Activated B cell treated with CpG ODN at 0.5 μM for 24 hours (primary cell): ENCODE measurements at regions of chr3 and their contacts with region 1.

Region 1: DNA sequence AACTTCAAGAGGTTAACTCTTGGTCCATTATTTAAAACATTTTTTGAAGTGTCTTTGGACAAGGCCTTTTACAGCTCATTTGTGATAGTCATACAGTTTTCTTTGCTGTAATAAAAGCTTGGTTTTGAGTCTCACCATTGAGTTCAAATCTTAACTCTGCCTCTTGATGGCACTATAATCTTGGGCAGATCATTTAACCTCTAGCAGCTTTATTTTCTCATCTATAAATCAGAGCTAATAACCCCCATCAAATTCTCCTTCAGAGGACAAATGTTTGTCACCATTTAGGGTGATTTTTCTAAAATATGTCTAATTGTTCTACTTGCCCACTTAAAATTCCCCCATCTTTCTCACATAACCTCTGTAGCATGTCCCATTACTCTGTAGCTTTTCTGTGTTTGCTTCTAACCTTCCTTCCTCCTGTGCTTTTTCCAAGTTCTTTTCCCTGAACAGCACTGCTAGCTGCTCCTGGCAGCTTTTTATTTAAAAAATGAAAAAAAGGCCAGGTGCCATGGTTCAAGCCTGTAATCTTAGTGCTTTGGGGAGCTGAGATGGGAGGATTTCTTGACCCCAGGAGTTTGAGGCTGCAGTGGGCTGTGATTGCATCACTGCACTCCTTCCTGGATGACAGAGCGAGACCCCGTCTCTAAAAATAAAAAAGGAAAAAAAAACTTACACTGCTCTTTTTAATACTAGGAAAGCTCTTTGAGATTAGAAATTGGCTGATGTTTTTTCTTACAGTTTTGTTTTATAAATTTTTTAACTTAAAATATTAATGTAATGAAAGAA is 28.5 kb downstream of the UBE2E1 start:
- DNase-seq: no peak
- ATAC-seq: no peak
- H3K4me3 Mint-ChIP-seq: no peak overlapping the region
- H3K27ac Mint-ChIP-seq: no peak overlapping the region
- H3K4me1 Mint-ChIP-seq: peaks cover 75% of the 10 kb centered on the region
- H3K27me3 Mint-ChIP-seq: no peaks in the 10 kb centered on the region
- CTCF ChIP-seq: no peak

Region 2: GRCh38 chr3:22039161-22039560 is 1795.1 kb before region 1 on chr3:
- CTCF ChIA-PET with region 1: no interaction called
- POLR2A ChIA-PET with region 1: no interaction called
- intact Hi-C with region 1: no loop called
- DNase-seq: no peak
- ATAC-seq: no peak
- H3K4me3 Mint-ChIP-seq: no peak overlapping the region
- H3K27ac Mint-ChIP-seq: no peak overlapping the region
- H3K4me1 Mint-ChIP-seq: no peaks in the 10 kb centered on the region
- H3K27me3 Mint-ChIP-seq: no peaks in the 10 kb centered on the region
- CTCF ChIP-seq: no peak

Region 3: GRCh38 chr3:23174426-23175039 is 659.7 kb before region 1 on chr3:
- CTCF ChIA-PET with region 1: no interaction called
- POLR2A ChIA-PET with region 1: no interaction called
- intact Hi-C with region 1: no loop called
- DNase-seq: no peak
- ATAC-seq: no peak
- H3K4me3 Mint-ChIP-seq: no peak overlapping the region
- H3K27ac Mint-ChIP-seq: no peak overlapping the region
- H3K4me1 Mint-ChIP-seq: no peaks in the 10 kb centered on the region
- H3K27me3 Mint-ChIP-seq: peaks cover 4% of the 10 kb centered on the region
- CTCF ChIP-seq: no peak

Region 4: GRCh38 chr3:23805633-23806533 is 28.4 kb before region 1 on chr3 and contains the start of gene UBE2E1:
- CTCF ChIA-PET with region 1: interaction called, 5 read pairs
- POLR2A ChIA-PET with region 1: interaction called, 23 read pairs
- intact Hi-C with region 1: loop called (anchors 1 kb)
- DNase-seq: peak; percentile 68
- ATAC-seq: peak; percentile 77
- H3K4me3 Mint-ChIP-seq: peak within 1 kb of the TSS; percentile 97
- H3K27ac Mint-ChIP-seq: peak within 1 kb of the TSS; percentile 97
- H3K4me1 Mint-ChIP-seq: peaks cover 41% of the 10 kb centered on the region
- H3K27me3 Mint-ChIP-seq: no peaks in the 10 kb centered on the region
- CTCF ChIP-seq: no peak
- total RNA-seq, gene UBE2E1: 79.9 and 85.2 TPM in 2 replicates

Region 5: DNA sequence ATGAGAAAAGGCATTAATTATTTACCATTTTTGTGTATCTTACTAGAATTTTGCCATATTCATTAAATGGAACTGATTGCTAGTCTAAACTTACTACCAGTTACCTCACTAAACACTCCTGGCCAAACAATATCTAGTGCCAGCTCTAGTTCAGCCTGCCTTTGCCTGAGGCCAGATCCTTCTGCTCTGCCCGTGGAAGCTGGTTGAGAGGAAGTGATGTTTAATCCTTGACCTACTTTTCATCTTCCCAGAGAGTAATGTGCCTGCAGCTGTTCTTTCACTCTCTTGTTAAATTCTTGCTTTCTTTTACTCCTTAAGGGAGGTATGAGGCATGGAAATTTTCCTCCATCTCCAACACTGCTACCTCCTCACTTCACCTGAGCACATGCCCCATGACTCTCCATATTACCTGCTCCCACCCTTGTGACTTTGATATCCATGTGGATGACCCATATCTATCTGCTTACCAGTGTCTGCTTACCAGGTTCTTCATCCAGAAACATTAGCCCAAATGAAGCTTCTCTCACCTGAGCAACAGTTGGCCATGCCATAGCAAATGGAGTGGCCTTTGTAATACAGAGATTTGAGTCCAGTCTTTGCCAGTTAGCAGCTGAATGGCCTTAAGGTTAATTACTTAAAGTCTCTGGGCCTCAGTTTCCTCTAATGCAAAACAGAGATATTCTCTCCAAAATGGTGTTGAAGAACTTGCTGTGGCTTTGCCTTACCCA is 24.9 kb after region 1 on chr3:
- CTCF ChIA-PET with region 1: interaction called, 5 read pairs
- POLR2A ChIA-PET with region 1: interaction called, 3 read pairs
- intact Hi-C with region 1: loop called (anchors 1 kb)
- DNase-seq: no peak
- ATAC-seq: no peak
- H3K4me3 Mint-ChIP-seq: no peak overlapping the region
- H3K27ac Mint-ChIP-seq: no peak overlapping the region
- H3K4me1 Mint-ChIP-seq: peaks cover 54% of the 10 kb centered on the region
- H3K27me3 Mint-ChIP-seq: no peaks in the 10 kb centered on the region
- CTCF ChIP-seq: no peak

Region 6: DNA sequence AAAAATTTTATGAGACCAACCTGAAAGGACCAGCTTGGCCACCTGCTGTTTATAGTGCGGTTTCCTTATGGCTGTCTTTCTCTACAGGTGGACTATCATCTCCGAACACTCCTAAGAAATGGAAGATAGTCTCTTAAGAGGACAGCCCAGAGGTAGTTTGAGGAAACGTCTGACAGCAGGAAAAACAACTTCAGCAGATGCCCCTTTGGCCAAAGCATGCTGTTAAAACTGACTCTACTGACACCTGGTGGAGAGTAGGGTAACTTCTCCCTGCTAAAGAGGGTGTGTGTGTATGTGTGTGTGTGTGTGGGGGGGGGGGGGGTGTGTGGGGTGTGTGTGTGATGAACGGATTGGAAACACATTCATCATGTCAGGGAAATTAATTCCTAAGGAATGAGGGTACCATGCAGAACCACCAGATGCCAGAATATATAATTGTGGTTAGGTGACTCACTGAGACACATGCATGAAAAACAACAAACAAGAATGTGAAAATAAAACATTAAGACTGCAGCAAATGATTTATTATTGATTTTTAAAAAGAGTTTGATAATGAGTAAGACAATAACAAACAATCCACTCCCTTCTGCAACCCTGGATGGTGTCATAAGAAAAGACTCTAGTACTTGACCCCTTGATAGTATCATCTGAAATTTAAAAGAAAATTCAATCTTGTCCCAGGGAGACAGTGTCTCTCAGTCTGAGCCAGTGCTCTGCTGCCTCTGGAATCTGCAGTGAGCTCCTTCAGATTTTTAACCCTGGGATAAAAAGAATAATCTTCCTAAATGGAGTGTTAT is 403.9 kb after region 1 on chr3:
- CTCF ChIA-PET with region 1: no interaction called
- POLR2A ChIA-PET with region 1: no interaction called
- intact Hi-C with region 1: loop called (anchors 5 kb)
- DNase-seq: no peak
- ATAC-seq: peak; percentile 75
- H3K4me3 Mint-ChIP-seq: no peak overlapping the region
- H3K27ac Mint-ChIP-seq: no peak overlapping the region
- H3K4me1 Mint-ChIP-seq: no peaks in the 10 kb centered on the region
- H3K27me3 Mint-ChIP-seq: no peaks in the 10 kb centered on the region
- CTCF ChIP-seq: no peak

Region 7: DNA sequence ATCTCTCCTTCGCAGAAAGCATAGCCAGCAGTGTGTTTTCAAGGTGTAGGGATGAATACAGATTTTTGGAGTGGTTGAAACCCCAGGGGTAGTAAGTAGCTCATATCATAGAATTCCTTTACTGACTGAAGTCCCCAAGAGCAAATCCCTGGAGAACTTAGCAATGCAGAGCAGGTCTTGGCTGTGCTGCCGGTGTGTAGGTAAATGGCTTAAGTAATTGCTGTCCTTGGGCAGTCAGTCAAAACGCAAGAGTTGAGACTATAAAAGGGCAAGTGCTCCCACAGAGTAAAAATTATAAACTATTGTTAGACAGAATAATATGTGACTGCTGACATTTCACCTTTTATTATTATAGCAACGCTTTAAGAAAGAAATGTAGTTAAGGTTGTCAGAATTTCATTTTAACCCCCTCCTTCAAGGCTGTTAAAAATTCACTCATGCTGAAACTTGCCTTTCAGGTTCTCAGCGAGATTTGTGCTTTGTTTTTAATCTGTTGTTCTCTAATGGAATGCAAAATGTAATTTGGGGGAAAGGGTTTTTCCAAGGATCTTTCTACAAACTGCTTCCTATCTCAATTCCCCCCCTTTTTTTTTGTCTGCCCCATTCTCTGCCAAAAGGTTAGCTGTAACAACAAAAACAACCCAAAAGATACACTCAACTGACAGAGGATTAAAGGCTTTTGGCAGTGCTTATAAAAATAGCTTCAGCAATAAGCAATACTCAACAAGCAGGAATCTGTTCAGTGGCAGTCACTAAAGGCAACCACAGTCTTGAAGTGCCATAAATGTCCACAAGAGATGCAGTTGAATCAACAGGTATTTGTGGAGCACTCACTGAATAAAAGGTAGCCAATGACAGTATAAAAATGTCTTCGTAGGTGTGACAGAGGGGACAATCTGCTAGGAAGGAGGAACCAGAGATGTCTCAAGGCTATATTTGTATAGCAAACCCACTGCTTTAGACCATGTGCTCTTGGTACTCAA is 555.1 kb after region 1 on chr3:
- CTCF ChIA-PET with region 1: no interaction called
- POLR2A ChIA-PET with region 1: no interaction called
- intact Hi-C with region 1: no loop called
- DNase-seq: no peak
- ATAC-seq: no peak
- H3K4me3 Mint-ChIP-seq: no peak overlapping the region
- H3K27ac Mint-ChIP-seq: no peak overlapping the region
- H3K4me1 Mint-ChIP-seq: no peaks in the 10 kb centered on the region
- H3K27me3 Mint-ChIP-seq: no peaks in the 10 kb centered on the region
- CTCF ChIP-seq: no peak